Naive thymus-derived CD4-positive, alpha-beta T cell (primary cell): ENCODE measurements at regions of chr10 and their contacts with region 1.

Region 1: DNA sequence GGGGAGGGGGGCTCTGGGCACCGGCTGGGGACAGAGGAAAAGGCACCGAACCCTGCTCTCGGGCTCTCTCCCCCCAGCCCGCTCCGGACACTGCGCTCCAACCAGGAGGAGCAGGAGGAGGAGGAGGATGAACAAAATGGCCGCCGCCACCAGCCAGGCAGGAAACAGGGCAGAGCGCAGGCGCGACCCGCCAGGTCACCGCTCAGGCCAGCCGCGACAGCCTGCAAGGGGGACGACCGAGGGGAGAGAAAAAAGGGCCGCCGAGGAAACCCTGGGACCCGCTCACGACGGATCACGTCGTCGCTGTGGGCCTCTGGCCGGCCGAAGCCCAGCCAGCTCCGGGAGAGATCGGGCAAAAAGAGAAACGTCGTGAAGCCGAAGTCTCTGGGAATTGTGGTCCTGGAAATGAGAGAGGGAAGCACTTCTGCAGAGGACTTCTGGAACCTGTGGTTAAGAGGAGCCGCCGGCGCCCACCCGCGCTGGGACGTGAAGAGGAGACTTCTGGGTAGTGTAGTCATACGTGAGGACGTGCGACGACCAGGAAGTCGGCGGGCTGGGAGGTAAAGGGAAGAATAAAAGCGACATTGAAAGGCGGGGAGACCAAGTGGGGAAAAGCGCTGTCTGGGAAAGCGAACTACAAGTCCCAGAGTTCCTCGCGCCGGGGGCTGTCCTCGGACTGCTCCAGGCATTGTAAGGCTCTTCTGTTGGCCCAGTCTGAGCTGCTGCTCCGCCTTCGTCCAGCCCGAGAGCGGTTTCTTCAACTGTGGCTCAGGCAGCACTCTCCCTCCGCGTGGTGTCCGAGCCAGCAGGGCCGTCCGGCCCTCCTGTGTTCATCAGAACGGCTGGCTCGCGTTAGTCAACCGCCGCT is at the start of gene TIAL1:
- DNase-seq: peak; percentile 73 to 95 (median 89)
- ATAC-seq: peak; percentile 88
- H3K4me3 ChIP-seq: peak within 1 kb of the TSS; percentile 96
- H3K4me3 Mint-ChIP-seq: peak within 1 kb of the TSS; percentile 85 to 99 (median 96)
- H3K27ac ChIP-seq: peak within 1 kb of the TSS; percentile 98
- H3K27ac Mint-ChIP-seq: peak within 1 kb of the TSS; percentile 90 to 99 (median 96)
- H3K4me1 ChIP-seq: peaks cover 28 to 38% of the 10 kb centered on the region in 2 donors
- H3K4me1 Mint-ChIP-seq: peaks cover 35 to 56% (median 48%) of the 10 kb centered on the region in 7 donors
- H3K27me3 ChIP-seq: no peaks in the 10 kb centered on the region
- H3K27me3 Mint-ChIP-seq: no peaks in the 10 kb centered on the region
- total RNA-seq, gene TIAL1: 166 to 228 (median 176) TPM

Region 2: DNA sequence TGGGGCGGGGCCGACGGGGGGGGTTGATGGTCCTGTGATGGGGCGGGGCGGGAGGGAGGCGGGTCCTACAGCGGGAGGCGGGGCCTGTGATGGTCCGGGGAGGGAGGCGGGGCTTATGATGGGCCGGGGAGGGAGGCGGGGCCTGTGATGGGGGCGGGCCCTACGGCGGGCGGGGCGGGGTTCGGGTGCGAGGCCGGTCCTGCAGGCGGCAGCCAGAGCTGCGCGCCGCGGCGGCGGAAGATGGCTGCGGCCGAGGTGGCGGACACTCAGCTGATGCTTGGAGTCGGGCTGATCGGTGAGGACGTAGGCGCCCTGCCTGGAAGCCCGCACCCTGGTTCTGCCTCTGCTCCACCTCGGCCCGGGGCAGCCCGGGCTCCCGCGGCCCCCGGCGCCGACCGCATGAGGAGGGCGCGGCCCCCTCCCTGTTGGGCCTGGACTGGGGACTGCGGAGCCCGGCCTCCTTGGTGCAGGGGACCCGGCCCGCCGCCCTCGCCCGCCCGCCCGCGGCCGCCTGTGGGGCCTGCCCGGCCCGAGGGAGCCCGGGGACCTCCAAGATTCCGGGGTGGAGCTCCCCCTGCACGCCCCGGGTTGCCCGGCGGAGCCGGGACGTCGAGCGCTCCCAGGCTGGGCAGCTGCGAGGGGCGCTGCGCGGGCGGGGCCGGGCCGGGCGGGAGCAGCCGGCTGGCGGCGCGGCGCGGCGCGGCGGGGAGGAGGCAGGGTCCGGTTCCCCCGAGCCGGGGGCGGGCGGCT is 492.7 kb before region 1 on chr10 and contains the start of gene DENND10:
- CTCF ChIA-PET with region 1: no interaction called
- POLR2A ChIA-PET with region 1: no interaction called
- intact Hi-C with region 1: loop called (anchors 5 to 10 kb)
- DNase-seq: peak; percentile 18 to 80 (median 51)
- ATAC-seq: peak; percentile 93
- H3K4me3 ChIP-seq: peak within 1 kb of the TSS; percentile 45
- H3K4me3 Mint-ChIP-seq: peak within 1 kb of the TSS; percentile 65 to 94 (median 85)
- H3K27ac ChIP-seq: peak within 1 kb of the TSS; percentile 69
- H3K27ac Mint-ChIP-seq: peak within 1 kb of the TSS; percentile 62 to 96 (median 84)
- H3K4me1 ChIP-seq: peaks cover 6 to 20% of the 10 kb centered on the region in 2 donors
- H3K4me1 Mint-ChIP-seq: peaks cover 5 to 35% (median 14%) of the 10 kb centered on the region in 7 donors
- H3K27me3 ChIP-seq: no peaks in the 10 kb centered on the region
- H3K27me3 Mint-ChIP-seq: no peaks in the 10 kb centered on the region
- total RNA-seq, gene DENND10: 22.1 to 41.7 (median 28.8) TPM

Region 3: DNA sequence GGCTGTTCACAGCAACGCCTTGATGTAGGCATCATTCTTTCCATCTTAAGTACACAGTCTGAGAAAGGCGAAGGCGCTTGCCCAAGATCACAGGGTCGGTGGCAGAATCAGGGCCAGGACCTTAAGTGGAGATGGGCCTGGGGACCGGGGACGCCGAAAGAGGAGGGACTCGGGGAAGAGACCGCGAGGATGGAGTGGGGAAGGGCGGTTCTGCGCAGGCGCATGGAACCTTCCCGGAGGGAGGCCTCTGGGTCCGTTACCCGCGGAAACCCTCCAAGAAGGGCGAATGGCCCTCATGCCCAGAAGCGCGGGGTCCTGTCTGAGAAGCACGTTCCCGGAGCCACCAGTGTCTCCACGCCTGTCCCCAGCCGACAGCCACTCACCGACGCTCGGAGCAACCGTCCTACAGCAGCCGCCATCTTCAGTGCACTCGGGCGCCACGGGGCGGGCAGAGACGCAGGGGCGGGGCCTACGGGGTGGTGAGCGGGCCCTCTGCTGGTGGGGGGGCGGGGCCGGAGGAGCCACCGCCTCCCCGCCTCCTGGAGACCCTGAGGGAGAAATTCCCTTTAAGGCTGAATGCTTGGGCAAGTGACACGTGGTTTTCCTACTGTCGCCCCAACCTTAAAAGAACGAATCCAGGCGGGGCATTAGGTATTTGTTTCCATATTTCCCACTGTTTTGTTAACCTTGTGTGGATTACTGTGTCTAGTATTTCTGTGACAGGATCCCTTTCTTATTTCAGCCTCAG is 418.2 kb before region 1 on chr10 and contains the start of gene PRDX3:
- CTCF ChIA-PET with region 1: no interaction called
- POLR2A ChIA-PET with region 1: no interaction called
- intact Hi-C with region 1: loop called (anchors 1 to 2 kb)
- DNase-seq: peak; percentile 81 to 96 (median 89)
- ATAC-seq: peak; percentile 100
- H3K4me3 ChIP-seq: peak within 1 kb of the TSS; percentile 97
- H3K4me3 Mint-ChIP-seq: peak within 1 kb of the TSS; percentile 91 to 99 (median 96)
- H3K27ac ChIP-seq: peak within 1 kb of the TSS; percentile 79
- H3K27ac Mint-ChIP-seq: peak within 1 kb of the TSS; percentile 86 to 98 (median 93)
- H3K4me1 ChIP-seq: peaks cover 7 to 13% of the 10 kb centered on the region in 2 donors
- H3K4me1 Mint-ChIP-seq: peaks cover 13 to 48% (median 36%) of the 10 kb centered on the region in 7 donors
- H3K27me3 ChIP-seq: no peaks in the 10 kb centered on the region
- H3K27me3 Mint-ChIP-seq: no peaks in the 10 kb centered on the region
- total RNA-seq, gene PRDX3: 11.7 to 120 (median 35.4) TPM

Region 4: DNA sequence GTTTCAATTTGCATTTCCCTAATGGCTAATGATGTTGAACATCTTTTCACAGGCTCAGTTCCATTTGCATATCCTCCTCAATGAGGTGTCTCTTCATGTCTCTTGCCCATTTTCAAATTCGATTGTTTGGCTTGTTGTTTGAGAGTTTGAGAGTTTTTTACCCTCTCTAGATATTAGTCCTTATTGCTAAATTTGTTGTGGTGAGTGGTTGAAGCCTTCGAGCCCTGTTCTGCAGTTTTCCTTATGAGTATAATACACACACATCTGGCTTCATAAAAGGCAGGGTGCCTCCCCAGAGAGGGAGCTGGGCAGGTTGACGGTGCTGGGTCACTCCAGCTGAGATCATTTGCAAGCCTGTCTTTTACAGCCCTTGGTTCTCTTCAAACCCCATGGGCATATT is 119.3 kb before region 1 on chr10:
- CTCF ChIA-PET with region 1: no interaction called
- POLR2A ChIA-PET with region 1: no interaction called
- intact Hi-C with region 1: no loop called
- DNase-seq: no peak
- ATAC-seq: no peak
- H3K4me3 ChIP-seq: no peak overlapping the region
- H3K4me3 Mint-ChIP-seq: peak overlapping the region in 6 of 10 donors; percentile 34 to 71 (median 68)
- H3K27ac ChIP-seq: no peak overlapping the region
- H3K27ac Mint-ChIP-seq: peak overlapping the region in 4 of 9 donors; percentile 30 to 78 (median 67)
- H3K4me1 ChIP-seq: peaks cover 20 to 26% of the 10 kb centered on the region in 2 donors
- H3K4me1 Mint-ChIP-seq: peaks cover 21 to 44% (median 35%) of the 10 kb centered on the region in 7 donors
- H3K27me3 ChIP-seq: no peaks in the 10 kb centered on the region
- H3K27me3 Mint-ChIP-seq: peaks cover 0 to 6% (median 0%) of the 10 kb centered on the region in 5 donors

Region 5: DNA sequence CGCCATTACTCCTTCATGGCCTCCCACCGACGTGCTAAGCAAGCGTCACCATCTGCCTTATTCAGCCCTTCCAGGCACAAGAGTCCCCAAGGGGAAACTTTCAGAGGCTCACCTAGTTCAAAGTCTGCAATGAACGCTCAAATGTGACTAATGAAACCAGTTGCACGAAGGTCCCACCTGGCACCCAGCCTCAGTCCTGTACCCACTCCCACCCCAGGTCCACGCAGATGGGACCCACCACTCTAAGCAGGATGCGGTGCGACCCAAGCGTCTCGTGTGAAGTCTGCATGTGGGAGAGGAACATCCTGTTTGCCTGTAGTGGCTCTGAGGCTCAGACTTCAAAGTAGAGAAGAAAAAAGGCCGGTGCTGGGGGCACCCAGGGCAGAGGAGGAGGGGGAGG is 94.6 kb before region 1 on chr10:
- CTCF ChIA-PET with region 1: no interaction called
- POLR2A ChIA-PET with region 1: interaction called, 3 read pairs
- intact Hi-C with region 1: loop called (anchors 1 to 5 kb)
- DNase-seq: peak; percentile 50 to 93 (median 91)
- ATAC-seq: peak; percentile 91
- H3K4me3 ChIP-seq: peak overlapping the region; percentile 46
- H3K4me3 Mint-ChIP-seq: peak overlapping the region; percentile 70 to 85 (median 82)
- H3K27ac ChIP-seq: peak overlapping the region; percentile 98
- H3K27ac Mint-ChIP-seq: peak overlapping the region; percentile 95 to 100 (median 99)
- H3K4me1 ChIP-seq: peaks cover 39 to 88% of the 10 kb centered on the region in 2 donors
- H3K4me1 Mint-ChIP-seq: peaks cover 56 to 98% (median 92%) of the 10 kb centered on the region in 7 donors
- H3K27me3 ChIP-seq: no peaks in the 10 kb centered on the region
- H3K27me3 Mint-ChIP-seq: no peaks in the 10 kb centered on the region

Region 6: GRCh38 chr10:119575506-119575905 is 21.3 kb before region 1 on chr10:
- CTCF ChIA-PET with region 1: no interaction called
- POLR2A ChIA-PET with region 1: interaction called, 4 read pairs
- intact Hi-C with region 1: loop called (anchors 1 to 2 kb)
- DNase-seq: peak in 7 of 9 donors; percentile 46 to 76 (median 60)
- ATAC-seq: peak; percentile 86
- H3K4me3 ChIP-seq: no peak overlapping the region
- H3K4me3 Mint-ChIP-seq: peak overlapping the region in 7 of 10 donors; percentile 10 to 65 (median 27)
- H3K27ac ChIP-seq: peak overlapping the region; percentile 59
- H3K27ac Mint-ChIP-seq: peak overlapping the region; percentile 16 to 91 (median 70)
- H3K4me1 ChIP-seq: peaks cover 12 to 19% of the 10 kb centered on the region in 2 donors
- H3K4me1 Mint-ChIP-seq: peaks cover 8 to 29% (median 20%) of the 10 kb centered on the region in 7 donors
- H3K27me3 ChIP-seq: no peaks in the 10 kb centered on the region
- H3K27me3 Mint-ChIP-seq: no peaks in the 10 kb centered on the region

Region 7: GRCh38 chr10:119892188-119893065 is 295.7 kb after region 1 on chr10 and contains the start of gene SEC23IP:
- CTCF ChIA-PET with region 1: no interaction called
- POLR2A ChIA-PET with region 1: no interaction called
- intact Hi-C with region 1: loop called (anchors 1 kb)
- DNase-seq: peak; percentile 77 to 94 (median 83)
- ATAC-seq: peak; percentile 99
- H3K4me3 ChIP-seq: peak within 1 kb of the TSS; percentile 95
- H3K4me3 Mint-ChIP-seq: peak within 1 kb of the TSS; percentile 92 to 100 (median 98)
- H3K27ac ChIP-seq: peak within 1 kb of the TSS; percentile 89
- H3K27ac Mint-ChIP-seq: peak within 1 kb of the TSS; percentile 95 to 99 (median 98)
- H3K4me1 ChIP-seq: peaks cover 12 to 21% of the 10 kb centered on the region in 2 donors
- H3K4me1 Mint-ChIP-seq: peaks cover 40 to 53% (median 48%) of the 10 kb centered on the region in 7 donors
- H3K27me3 ChIP-seq: no peaks in the 10 kb centered on the region
- H3K27me3 Mint-ChIP-seq: peaks cover 0 to 4% (median 0%) of the 10 kb centered on the region in 5 donors
- total RNA-seq, gene SEC23IP: 34.8 to 68.3 (median 54.4) TPM